Sigmoid colon (tissue), 7 donors: ENCODE measurements at regions of chr19 and their contacts with region 1.

Region 1: GRCh38 chr19:12092065-12092867 is 27.7 kb downstream of the ZNF844 start:
- DNase-seq: peak; percentile 92
- H3K4me3 ChIP-seq: peak overlapping the region; percentile 51 to 78 (median 71)
- H3K27ac ChIP-seq: peak overlapping the region; percentile 79 to 86 (median 80)
- H3K4me1 ChIP-seq: peaks cover 0 to 12% (median 8%) of the 10 kb centered on the region in 4 donors
- H3K27me3 ChIP-seq: no peaks in the 10 kb centered on the region
- CTCF ChIP-seq: no peak
- EP300 ChIP-seq: no peak
- POLR2A ChIP-seq: no peak

Region 2: DNA sequence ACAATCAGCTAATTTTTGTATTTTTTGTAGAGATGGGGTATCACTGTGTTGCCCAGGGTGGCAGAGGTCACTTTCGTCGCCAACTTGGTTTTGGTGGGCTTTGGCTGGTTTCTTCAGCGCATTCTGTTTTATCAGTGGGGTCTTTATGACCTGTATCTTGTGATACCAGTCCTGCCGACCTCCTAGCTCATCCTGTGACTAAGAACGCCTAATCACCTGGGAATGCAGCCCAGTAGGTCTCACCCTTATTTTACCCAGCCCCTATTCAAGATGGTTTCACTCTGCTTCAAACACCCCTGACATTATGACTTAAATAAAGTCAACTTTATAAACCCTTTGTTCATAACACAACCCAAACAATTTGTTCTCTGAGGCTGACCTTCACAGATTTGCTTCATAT is 36.5 kb before region 1 on chr19:
- intact Hi-C with region 1: loop called (anchors 5 kb)
- DNase-seq: no peak
- H3K4me3 ChIP-seq: no peak overlapping the region
- H3K27ac ChIP-seq: no peak overlapping the region
- H3K4me1 ChIP-seq: peaks cover 0 to 19% (median 14%) of the 10 kb centered on the region in 4 donors
- H3K27me3 ChIP-seq: no peaks in the 10 kb centered on the region
- CTCF ChIP-seq: no peak
- EP300 ChIP-seq: no peak
- POLR2A ChIP-seq: no peak